ENCODE measurements at regions of chr5 and their contacts with region 1.

Region 1: DNA sequence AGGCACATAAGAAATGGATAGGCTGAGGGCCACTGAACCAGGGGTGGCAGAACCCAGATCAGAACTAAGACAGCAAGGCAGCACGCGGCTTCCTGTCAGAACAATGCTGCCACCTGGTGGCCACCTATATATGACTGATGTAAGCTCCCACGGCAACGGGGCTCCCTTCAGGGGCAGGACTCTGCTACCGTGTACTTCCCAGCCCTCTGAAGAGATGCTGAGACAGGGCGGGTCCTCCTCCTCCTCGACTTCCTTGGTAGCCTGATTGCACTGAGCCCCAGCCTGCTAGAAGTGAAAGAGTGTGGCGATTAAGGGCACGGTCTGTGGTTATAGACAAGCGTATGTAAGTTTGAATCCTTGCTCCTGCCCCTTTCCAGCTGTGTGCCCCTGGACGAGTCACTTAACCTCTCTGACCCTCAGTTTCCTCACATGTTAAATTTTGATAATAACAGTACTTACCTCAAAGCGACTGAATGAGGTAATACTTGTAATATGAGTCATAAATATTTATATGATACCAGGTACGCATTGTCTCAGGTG is 13.3 kb downstream of the RPS14 start:
- DNase-seq: peak; percentile 93
- ATAC-seq: peak; percentile 85

Region 2: GRCh38 chr5:150022163-150022540 is 414.1 kb before region 1 on chr5:
- intact Hi-C with region 1: loop called (anchors 10 kb)
- DNase-seq: no peak
- ATAC-seq: peak; percentile 56

Region 3: DNA sequence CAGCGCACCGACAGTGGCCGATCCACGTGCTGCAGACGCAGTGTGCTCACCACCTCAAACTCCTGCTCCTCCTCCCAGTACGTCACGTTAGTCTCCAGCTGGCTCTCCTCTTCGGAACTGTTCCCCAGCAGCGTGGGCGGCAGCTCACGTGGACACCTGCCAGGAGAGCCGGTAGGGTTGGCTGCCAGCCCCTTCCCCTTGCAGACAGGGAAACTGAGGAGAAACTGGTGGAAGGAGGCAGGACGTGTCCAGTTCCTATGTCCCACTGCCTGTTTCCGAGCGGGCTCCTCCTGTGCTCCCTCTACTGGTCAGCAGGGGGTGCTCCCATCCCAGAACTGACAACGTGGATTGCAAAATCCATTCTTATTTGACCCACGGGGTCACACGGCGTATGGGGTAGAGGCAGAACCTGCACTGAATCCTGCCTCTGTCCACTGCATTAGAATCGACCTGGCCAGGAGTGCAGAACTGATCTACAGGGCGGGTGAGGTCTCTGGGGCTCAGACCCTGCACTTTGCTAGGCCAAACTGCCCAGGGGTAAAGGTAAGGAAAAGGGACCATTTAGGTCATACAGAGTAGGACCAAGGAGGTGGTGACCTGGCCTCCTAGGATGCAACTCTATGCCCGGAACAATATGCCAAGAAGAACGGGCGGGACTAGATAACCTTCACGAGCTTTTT is 306.3 kb before region 1 on chr5:
- intact Hi-C with region 1: loop called (anchors 5 kb)
- DNase-seq: no peak
- ATAC-seq: peak; percentile 70

Region 4: DNA sequence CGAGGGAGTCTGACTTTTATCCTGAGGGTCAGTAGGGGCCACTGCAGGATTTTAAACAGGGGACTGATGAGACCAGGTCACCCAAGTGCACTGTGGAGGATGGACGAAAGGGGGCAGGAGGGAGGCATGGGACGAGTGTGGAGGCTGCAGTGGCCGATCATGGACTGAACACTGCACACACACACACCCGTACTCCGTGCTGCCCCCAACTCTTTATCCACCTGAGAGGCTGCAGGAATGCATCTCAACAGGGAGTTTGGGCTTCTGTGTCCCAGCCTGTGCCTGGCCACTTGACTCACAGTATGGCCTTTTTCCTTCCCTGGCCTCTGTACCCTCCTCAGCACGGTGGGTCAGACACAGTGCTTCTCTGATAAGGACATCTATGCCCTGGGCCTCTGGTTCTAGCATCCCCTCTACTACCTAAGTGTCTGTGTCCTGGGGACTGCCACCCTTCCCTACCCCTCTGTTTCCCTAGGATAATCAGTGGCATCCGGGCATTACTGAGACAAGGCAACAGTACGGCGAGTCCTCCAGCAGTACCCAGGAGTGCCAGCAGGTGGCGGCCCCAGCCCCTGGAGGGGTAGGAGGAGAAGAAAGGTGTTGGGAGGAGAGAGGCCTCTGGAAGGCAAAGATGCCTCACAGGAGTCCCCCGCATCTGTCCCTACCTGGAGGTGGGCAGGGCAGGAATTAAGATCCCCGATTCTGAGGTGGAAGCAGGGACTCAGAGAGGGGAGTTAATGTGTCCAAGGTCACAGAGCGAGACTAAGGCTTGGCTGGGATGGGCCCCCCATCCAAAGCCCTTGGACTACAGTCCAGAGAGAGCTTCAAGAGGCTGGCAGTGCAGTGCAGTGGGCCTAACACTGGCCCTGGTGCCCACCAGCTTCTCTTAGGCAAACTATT is 274.7 kb before region 1 on chr5:
- intact Hi-C with region 1: loop called (anchors 10 kb)
- DNase-seq: peak; percentile 88
- ATAC-seq: peak; percentile 51

Region 5: DNA sequence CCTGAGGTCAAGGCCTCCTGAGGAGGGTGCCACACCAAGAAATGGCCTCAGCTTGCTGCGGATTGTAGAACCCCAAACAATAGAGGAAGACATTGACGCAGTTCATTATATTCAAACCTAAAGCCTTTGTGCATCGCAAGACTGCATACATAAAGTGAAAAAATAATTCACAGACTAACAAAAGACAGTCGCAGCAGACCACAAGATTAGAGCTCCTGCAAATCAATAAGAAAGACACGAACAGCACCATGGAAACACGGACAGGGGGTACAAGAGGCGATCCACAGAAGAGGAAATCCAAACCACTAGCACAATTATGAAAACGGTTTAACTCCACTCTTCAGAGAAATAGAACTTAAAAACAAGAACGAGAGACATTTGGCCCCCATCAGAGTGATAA is 88.8 kb before region 1 on chr5:
- intact Hi-C with region 1: no loop called
- DNase-seq: no peak
- ATAC-seq: no peak

Region 6: GRCh38 chr5:150357326-150358260 is 78.6 kb before region 1 on chr5 and contains the start of gene TCOF1:
- intact Hi-C with region 1: loop called (anchors 5 kb)
- DNase-seq: peak; percentile 99
- ATAC-seq: peak; percentile 99
- total RNA-seq, gene TCOF1: 17.8 TPM

Region 7: GRCh38 chr5:150399524-150400211 is 36.5 kb before region 1 on chr5:
- intact Hi-C with region 1: loop called (anchors 5 kb)
- DNase-seq: no peak
- ATAC-seq: no peak

Region 8: GRCh38 chr5:150412319-150413175 is 23.7 kb before region 1 on chr5 and contains the start of gene CD74:
- intact Hi-C with region 1: no loop called
- DNase-seq: peak; percentile 89
- ATAC-seq: peak; percentile 54
- total RNA-seq, gene CD74: 327 TPM

Measured in Right ventricle myocardium inferior (tissue), 1 donor.